CD4-positive, alpha-beta memory T cell (primary cell): ENCODE measurements at regions of chr3 and their contacts with region 1.

Region 1: GRCh38 chr3:196711838-196712513 is at the starts of genes CEP19 and PIGX:
- DNase-seq: peak; percentile 93 to 98 (median 96)
- H3K4me3 ChIP-seq: peak within 1 kb of the TSS; percentile 68 to 87
- H3K4me3 Mint-ChIP-seq: peak within 1 kb of the TSS; percentile 85 to 98 (median 96)
- H3K27ac ChIP-seq: peak within 1 kb of the TSS; percentile 99
- H3K27ac Mint-ChIP-seq: peak within 1 kb of the TSS; percentile 93 to 100 (median 99)
- H3K4me1 ChIP-seq: peaks cover 21% of the 10 kb centered on the region
- H3K4me1 Mint-ChIP-seq: peaks cover 12 to 33% (median 24%) of the 10 kb centered on the region in 4 donors
- H3K27me3 ChIP-seq: no peaks in the 10 kb centered on the region
- H3K27me3 Mint-ChIP-seq: no peaks in the 10 kb centered on the region
- total RNA-seq, gene CEP19: 7.8 to 8.2 TPM
- total RNA-seq, gene PIGX: 19.1 to 23.7 TPM

Region 2: GRCh38 chr3:196726788-196727675 is 15.1 kb after region 1 on chr3:
- CTCF ChIA-PET with region 1: interaction called, 5 read pairs
- POLR2A ChIA-PET with region 1: interaction called, 10 read pairs
- intact Hi-C with region 1: no loop called
- DNase-seq: peak in 3 of 5 donors; percentile 13 to 52 (median 16)
- H3K4me3 ChIP-seq: no peak overlapping the region
- H3K4me3 Mint-ChIP-seq: peak overlapping the region in 2 of 8 donors; percentile 11 to 36
- H3K27ac ChIP-seq: no peak overlapping the region
- H3K27ac Mint-ChIP-seq: peak overlapping the region in 4 of 7 donors; percentile 13 to 53 (median 44)
- H3K4me1 ChIP-seq: peaks cover 19% of the 10 kb centered on the region
- H3K4me1 Mint-ChIP-seq: peaks cover 11 to 31% (median 19%) of the 10 kb centered on the region in 4 donors
- H3K27me3 ChIP-seq: no peaks in the 10 kb centered on the region
- H3K27me3 Mint-ChIP-seq: no peaks in the 10 kb centered on the region